WTC11 (cell line): ENCODE measurements at regions of chr5 and their contacts with region 1.

Region 1: DNA sequence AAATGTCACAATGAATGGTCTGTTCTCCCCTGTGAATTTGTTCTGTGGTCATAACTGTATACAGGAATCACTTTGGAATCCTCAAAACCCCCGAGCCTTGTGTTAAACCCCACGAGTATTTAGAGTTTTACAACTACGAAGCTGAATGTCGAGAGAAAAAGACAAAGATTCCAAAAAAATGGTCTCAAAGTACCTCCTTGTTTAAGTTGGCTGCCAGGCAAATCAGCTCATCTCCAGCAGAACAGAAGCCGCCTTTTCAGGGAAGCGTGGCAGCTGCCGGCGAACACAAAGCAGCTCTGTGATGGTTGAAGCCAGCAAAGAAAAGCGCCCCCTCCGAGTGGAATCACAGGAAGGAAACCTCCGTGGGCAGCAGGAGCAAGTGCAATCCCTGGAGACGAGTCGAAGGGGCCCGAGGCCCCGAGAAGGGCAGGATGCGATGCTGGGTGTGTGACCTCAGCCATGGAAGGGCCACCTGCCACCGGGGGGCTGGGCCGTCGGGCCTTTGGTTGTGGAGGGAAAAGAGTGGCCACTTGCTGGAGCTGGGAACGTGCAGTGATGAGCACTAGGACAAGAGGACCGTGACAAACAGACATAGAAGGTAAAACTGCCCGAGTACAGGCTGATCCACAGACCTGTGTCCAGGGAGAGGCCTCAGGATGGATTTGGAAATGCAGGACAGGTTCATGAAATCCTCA is 706.4 kb downstream of the SEMA5A start:
- DNase-seq: no peak
- ATAC-seq: no peak
- H3K4me3 Mint-ChIP-seq: no peak overlapping the region
- H3K27ac Mint-ChIP-seq: no peak overlapping the region
- H3K4me1 Mint-ChIP-seq: no peaks in the 10 kb centered on the region
- H3K27me3 Mint-ChIP-seq: peaks cover 5% of the 10 kb centered on the region
- CTCF ChIP-seq: no peak

Region 2: DNA sequence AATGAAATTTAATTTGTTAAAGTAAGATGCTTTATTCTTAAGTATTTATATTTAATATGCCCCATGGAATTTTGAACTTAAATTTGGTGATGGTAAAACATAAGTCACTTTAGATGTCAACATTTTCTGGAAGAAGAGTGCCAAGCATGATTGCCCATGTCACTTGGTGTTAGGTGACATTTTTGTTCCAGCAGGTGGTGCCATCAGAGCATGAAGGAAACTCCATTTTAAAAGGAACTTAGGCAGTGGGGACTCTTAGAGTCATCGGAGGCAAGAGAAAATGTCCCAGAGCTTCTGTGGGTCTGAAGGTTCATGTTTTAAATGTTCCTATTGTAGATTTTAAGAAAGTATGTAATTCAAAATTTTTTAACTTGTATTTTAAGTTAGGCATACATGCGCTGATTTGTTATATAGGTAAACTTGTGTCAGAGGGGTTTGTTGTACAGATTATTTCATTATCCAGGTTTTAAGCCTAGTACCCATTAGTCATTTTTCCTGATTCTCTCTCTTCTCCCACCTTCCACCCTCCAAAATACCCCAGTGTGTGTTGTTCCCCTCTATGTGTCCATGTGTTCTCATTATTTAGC is 82.9 kb before region 1 on chr5:
- CTCF ChIA-PET with region 1: interaction called, 10 read pairs
- POLR2A ChIA-PET with region 1: no interaction called
- DNase-seq: peak; percentile 25
- ATAC-seq: peak; percentile 74
- H3K4me3 Mint-ChIP-seq: no peak overlapping the region
- H3K27ac Mint-ChIP-seq: no peak overlapping the region
- H3K4me1 Mint-ChIP-seq: peaks cover 5% of the 10 kb centered on the region; the same call in 1 of the 2 replicates
- H3K27me3 Mint-ChIP-seq: no peaks in the 10 kb centered on the region
- CTCF ChIP-seq: peak; percentile 17; the same call in 1 of the 2 replicates

Region 3: DNA sequence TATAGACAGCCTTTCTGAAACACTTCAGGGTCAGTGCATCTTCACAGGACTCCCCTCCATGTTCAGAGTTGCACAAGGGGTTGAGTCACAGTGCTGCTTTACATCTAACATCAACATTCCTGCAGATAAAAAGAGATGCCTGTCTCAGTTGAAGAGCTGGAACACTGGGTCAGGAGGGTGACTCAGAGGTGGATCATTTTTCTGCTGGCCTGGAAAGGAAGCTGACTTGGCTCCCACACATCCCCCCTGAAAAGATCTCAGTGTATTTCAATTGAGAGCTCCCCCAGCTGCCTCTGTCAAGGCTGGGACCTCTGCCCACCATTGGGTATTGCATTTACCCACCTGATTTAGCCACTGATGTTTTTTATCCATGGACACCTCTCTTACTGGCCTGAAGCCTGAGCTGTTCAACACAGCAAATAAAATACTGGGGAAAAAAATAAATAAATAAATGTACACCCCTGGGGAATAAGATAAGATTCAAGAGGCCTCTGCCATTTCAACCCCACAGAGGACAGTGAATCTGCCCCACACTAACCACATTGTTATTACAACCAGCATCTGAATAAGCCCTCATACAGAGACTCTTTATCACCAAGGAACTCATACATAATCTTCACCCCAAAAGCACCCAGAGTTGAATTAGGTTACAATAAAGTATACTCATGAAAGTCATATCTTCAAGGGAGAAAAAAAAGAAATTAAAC is 10.0 kb before region 1 on chr5:
- CTCF ChIA-PET with region 1: interaction called, 14 read pairs
- POLR2A ChIA-PET with region 1: no interaction called
- DNase-seq: no peak
- ATAC-seq: no peak
- H3K4me3 Mint-ChIP-seq: no peak overlapping the region
- H3K27ac Mint-ChIP-seq: no peak overlapping the region
- H3K4me1 Mint-ChIP-seq: peaks cover 26% of the 10 kb centered on the region
- H3K27me3 Mint-ChIP-seq: no peaks in the 10 kb centered on the region
- CTCF ChIP-seq: no peak

Region 4: GRCh38 chr5:8923526-8923925 is 84.0 kb after region 1 on chr5:
- CTCF ChIA-PET with region 1: no interaction called
- POLR2A ChIA-PET with region 1: no interaction called
- DNase-seq: no peak
- ATAC-seq: no peak
- H3K4me3 Mint-ChIP-seq: no peak overlapping the region
- H3K27ac Mint-ChIP-seq: no peak overlapping the region
- H3K4me1 Mint-ChIP-seq: no peaks in the 10 kb centered on the region
- H3K27me3 Mint-ChIP-seq: no peaks in the 10 kb centered on the region
- CTCF ChIP-seq: no peak

Region 5: GRCh38 chr5:8934455-8934854 is 94.9 kb after region 1 on chr5:
- CTCF ChIA-PET with region 1: no interaction called
- POLR2A ChIA-PET with region 1: no interaction called
- DNase-seq: no peak
- ATAC-seq: peak; percentile 50
- H3K4me3 Mint-ChIP-seq: no peak overlapping the region
- H3K27ac Mint-ChIP-seq: no peak overlapping the region
- H3K4me1 Mint-ChIP-seq: no peaks in the 10 kb centered on the region; the same call in 1 of the 2 replicates
- H3K27me3 Mint-ChIP-seq: no peaks in the 10 kb centered on the region; the same call in 1 of the 2 replicates
- CTCF ChIP-seq: no peak